Upper lobe of right lung (tissue), 1 donor: ENCODE measurements at regions of chr2 and their contacts with region 1.

Region 1: GRCh38 chr2:33412920-33413319 is 63.5 kb upstream of the RASGRP3 start:
- DNase-seq: no peak
- ATAC-seq: no peak
- H3K4me3 ChIP-seq: no peak overlapping the region
- H3K27ac ChIP-seq: no peak overlapping the region
- H3K4me1 ChIP-seq: no peaks in the 10 kb centered on the region
- H3K27me3 ChIP-seq: no peaks in the 10 kb centered on the region
- CTCF ChIP-seq: peak; percentile 50

Region 2: DNA sequence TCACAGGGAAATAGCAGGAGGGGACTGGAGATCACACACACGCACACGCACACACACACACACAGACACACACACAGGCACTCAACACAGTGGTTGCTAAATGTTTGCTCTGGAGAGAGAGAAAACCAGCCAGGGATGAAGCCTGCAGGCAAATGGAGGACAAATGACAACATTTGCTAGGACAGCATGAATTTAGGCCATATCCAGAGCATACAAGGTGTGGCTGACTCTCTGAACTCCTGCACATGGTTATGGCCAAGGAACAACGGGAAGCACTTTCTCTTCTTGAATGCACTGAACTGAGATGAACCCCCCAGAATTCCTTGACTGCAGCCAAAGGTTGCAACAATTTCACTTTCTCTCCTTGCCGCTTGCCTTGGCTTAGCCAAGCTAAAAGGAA is 166.5 kb before region 1 on chr2:
- intact Hi-C with region 1: no loop called
- DNase-seq: no peak
- ATAC-seq: no peak
- H3K4me3 ChIP-seq: no peak overlapping the region
- H3K27ac ChIP-seq: no peak overlapping the region
- H3K4me1 ChIP-seq: peaks cover 4% of the 10 kb centered on the region
- H3K27me3 ChIP-seq: no peaks in the 10 kb centered on the region
- CTCF ChIP-seq: no peak

Region 3: DNA sequence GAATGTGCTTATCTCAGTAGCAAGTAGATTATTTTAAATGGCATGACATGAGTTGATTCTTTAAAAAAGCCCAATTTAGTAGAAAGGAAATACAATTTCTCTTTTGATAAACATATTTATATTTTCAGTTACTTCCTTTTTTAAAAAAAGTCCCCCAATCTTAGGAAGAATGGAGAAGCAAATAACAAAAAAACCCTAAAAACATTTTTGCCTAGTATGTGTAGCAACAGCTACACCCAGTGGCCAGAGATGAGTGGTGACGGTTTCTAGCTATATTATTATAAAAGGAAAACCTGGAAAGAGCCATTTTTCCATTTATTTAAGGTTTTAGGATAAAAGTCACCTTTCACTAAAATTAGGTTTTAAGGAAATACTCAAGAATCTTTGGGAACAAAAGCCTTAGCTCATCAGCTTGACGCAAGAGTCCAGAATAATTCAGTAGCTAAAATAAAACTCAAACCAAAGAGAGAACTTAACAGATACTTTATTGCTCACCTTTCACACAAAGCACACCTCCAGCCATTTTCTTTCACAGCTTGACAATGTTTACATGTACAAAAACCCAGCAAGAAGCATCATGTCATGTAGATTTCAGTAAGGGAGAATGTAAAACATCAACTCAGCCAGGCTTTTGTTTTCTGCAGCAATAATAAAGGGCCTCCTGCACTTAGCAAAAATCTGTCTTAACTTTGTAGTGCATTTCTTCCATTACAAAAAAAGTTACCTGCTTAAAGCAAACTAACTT is 170.4 kb after region 1 on chr2:
- intact Hi-C with region 1: loop called (anchors 10 kb)
- DNase-seq: no peak
- ATAC-seq: peak; percentile 60
- H3K4me3 ChIP-seq: no peak overlapping the region
- H3K27ac ChIP-seq: no peak overlapping the region
- H3K4me1 ChIP-seq: no peaks in the 10 kb centered on the region
- H3K27me3 ChIP-seq: no peaks in the 10 kb centered on the region
- CTCF ChIP-seq: peak; percentile 88

Region 4: DNA sequence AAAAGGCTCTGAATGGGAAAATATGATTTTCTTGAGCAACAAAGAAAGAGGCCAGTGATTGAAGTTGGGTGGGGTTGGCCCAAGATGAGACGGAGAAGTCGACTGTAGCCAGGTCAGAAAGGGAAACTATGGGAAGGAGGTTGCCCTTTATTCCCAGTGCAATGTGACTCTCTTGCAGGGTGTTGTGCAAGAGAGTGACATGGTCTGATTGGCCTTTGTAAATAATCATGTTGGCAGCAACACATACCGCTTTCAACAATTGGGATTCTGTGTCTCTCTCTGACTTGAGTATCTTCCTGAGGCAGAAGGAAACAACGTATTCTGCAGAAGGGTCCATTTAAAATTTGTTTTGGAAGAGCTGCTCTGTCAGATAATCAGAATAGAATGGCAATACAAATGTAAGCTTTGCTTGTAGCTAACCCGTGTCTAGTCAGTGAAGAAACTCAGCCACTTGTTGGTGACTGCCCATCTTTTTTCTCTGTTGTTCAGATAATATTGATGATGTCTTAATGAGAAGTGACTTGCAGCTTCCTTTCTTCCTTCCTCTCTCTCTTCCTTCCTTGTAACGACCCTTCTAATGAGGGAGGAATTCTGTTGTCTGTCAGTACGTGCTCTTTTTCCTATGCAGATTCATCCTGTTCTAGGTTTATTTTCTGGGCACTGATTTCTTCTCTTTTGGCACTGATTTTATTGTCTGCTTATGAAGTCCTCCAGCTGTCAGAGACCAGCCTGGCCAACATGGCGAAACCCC is 497.2 kb after region 1 on chr2:
- intact Hi-C with region 1: no loop called
- DNase-seq: no peak
- ATAC-seq: no peak
- H3K4me3 ChIP-seq: no peak overlapping the region
- H3K27ac ChIP-seq: no peak overlapping the region
- H3K4me1 ChIP-seq: no peaks in the 10 kb centered on the region
- H3K27me3 ChIP-seq: no peaks in the 10 kb centered on the region
- CTCF ChIP-seq: no peak